ENCODE measurements at regions of chr6 and their contacts with region 1.

Region 1: DNA sequence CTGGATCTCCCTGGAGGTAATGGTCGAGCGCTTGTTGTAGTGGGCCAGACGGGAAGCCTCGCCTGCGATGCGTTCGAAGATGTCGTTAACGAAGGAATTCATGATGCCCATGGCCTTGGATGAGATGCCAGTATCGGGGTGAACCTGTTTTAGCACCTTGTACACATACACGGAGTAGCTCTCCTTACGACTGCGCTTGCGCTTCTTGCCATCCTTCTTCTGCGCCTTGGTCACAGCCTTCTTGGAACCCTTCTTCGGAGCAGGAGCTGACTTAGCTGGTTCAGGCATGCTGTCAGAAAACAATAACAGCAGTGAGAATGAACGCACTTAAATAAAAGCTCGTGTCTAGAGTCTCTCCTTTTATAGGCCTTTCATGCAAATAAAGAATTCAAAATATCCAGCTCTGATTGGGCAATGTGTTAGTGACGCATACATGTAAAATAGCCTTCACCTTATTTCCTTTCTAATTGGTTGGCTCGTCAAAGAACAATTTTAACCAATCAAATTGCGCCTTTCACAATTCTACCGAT is 129.2 kb downstream of the HFE start:
- DNase-seq: peak; percentile 100
- ATAC-seq: peak; percentile 77
- H3K4me3 ChIP-seq: peak overlapping the region; percentile 75
- H3K27ac ChIP-seq: peak overlapping the region; percentile 93
- H3K4me1 ChIP-seq: peaks cover 12% of the 10 kb centered on the region
- H3K27me3 ChIP-seq: no peaks in the 10 kb centered on the region
- CTCF ChIP-seq: no peak
- EP300 ChIP-seq: no peak
- POLR2A ChIP-seq: peak; percentile 84
- RAD21 ChIP-seq: 0 out of 2 replicates have a peak, but pooled peaks have one; percentile 3

Region 2: DNA sequence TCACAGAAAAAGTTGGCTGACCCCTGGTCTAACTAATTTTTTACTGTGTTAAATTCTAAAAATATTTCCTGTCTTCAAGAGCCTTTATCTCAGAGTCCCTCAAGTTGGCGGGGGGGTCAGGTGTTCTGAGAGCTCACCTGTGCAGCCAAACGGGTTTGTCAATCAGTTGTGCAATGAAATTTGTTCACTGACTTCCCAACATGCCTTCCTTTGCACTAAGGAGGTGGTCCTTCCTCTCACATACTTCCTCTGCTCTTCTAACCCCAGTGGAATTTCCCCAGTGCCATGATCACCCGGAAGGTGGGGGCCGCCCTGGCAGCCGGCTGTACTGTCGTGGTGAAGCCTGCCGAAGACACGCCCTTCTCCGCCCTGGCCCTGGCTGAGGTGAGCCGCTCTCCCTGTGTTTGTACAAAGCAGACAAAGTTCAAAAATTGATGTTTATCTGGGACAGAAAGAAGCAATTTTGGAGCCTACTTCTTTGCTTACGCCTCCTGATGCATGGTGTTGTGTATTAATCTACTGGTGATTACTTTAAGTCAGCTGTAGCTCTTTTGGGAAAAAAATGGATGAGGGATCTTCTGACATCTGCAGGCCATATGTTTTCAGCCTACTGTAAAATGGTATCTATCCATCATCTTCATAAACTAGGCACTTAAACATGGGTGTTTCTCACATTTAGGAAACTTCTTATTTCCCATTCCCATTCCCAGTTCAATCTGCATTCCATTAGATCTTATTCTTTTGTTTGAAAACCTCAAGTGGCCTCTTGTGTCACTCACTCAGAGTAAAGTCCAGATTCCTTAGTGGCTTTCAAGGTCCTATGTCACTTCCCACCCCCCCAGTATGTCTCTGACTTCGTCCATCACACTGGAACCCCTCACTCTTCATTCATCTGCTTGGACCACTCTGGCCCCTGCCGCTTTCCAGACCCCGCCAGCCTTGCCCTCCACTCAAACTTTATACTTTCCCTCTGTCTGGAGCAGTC is 1711.5 kb before region 1 on chr6:
- CTCF ChIA-PET with region 1: no interaction called
- POLR2A ChIA-PET with region 1: no interaction called
- RAD21 ChIA-PET with region 1: no interaction called
- SMC1A ChIA-PET with region 1: no interaction called
- in situ Hi-C with region 1: no loop called
- intact Hi-C with region 1: no loop called
- DNase-seq: no peak
- ATAC-seq: no peak
- H3K4me3 ChIP-seq: no peak overlapping the region
- H3K27ac ChIP-seq: no peak overlapping the region
- H3K4me1 ChIP-seq: no peaks in the 10 kb centered on the region
- H3K27me3 ChIP-seq: no peaks in the 10 kb centered on the region
- CTCF ChIP-seq: no peak
- EP300 ChIP-seq: no peak
- POLR2A ChIP-seq: no peak
- RAD21 ChIP-seq: no peak

Region 3: GRCh38 chr6:24655215-24655614 is 1561.2 kb before region 1 on chr6:
- CTCF ChIA-PET with region 1: no interaction called
- POLR2A ChIA-PET with region 1: no interaction called
- RAD21 ChIA-PET with region 1: no interaction called
- SMC1A ChIA-PET with region 1: no interaction called
- in situ Hi-C with region 1: no loop called
- intact Hi-C with region 1: no loop called
- DNase-seq: no peak
- ATAC-seq: no peak
- H3K4me3 ChIP-seq: no peak overlapping the region
- H3K27ac ChIP-seq: no peak overlapping the region
- H3K4me1 ChIP-seq: no peaks in the 10 kb centered on the region
- H3K27me3 ChIP-seq: no peaks in the 10 kb centered on the region
- CTCF ChIP-seq: no peak
- EP300 ChIP-seq: no peak
- POLR2A ChIP-seq: no peak
- RAD21 ChIP-seq: no peak

Region 4: DNA sequence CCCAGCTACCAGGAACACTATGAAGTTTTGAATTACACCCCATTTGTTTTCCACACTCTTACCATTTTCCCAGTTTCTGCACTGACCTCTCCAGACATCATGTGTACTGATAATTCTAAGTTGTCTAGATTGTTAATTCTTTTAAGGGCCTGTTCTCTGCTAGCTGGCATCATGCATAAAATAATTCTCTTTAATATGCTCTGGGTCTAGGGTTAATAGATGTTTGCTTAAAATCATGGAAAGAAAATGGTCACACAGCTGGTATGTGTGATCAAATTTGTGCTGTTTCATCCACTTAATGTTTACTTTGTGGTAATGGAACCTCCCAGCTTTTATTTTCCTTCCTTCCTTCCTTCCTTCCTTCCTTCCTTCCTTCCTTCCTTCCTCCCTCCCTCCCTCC is 80.1 kb before region 1 on chr6:
- CTCF ChIA-PET with region 1: no interaction called
- POLR2A ChIA-PET with region 1: no interaction called
- RAD21 ChIA-PET with region 1: no interaction called
- SMC1A ChIA-PET with region 1: no interaction called
- in situ Hi-C with region 1: no loop called
- intact Hi-C with region 1: no loop called
- DNase-seq: no peak
- ATAC-seq: no peak
- H3K4me3 ChIP-seq: no peak overlapping the region
- H3K27ac ChIP-seq: no peak overlapping the region
- H3K4me1 ChIP-seq: peaks cover 14% of the 10 kb centered on the region
- H3K27me3 ChIP-seq: no peaks in the 10 kb centered on the region
- CTCF ChIP-seq: no peak
- EP300 ChIP-seq: no peak
- POLR2A ChIP-seq: no peak
- RAD21 ChIP-seq: no peak

Region 5: DNA sequence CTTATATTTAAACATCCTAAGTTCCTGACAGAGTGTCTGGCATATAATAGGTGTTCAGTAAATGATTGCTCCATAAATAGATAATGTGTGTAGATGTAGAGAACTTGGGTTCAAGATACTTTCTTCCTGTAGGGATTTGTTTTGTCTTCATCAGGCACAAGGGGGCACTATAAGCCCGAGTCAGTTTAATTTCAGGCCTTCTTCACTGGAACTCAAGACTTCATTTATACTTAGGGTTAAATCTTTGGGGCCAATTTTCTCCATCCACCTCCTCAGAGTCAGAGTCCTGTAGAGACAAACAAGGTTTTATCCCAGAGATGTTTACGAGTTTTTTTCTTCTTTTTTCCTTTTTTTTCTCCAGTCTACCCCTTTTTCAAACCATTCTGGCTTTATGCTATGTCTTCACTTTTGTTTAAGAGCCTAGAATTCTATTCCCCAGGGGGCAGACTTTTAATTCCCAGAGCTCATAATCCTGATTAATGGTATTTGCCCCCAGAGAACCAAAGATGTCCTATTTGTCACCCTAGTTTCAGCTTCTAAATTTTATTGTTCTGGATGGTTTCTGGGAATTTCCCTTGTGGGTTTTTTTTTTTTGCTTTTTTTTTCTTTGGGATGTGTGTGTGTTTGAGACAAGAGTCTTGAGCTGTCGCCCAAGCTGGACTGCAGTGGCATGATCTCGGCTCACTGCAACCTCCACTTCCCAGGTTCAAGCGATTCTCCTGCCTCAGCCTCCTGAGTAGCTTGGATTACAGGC is 40.8 kb before region 1 on chr6:
- CTCF ChIA-PET with region 1: interaction called, 8 read pairs
- POLR2A ChIA-PET with region 1: interaction called, 6 read pairs
- RAD21 ChIA-PET with region 1: interaction called, 14 read pairs
- SMC1A ChIA-PET with region 1: interaction called, 17 read pairs
- in situ Hi-C with region 1: no loop called
- intact Hi-C with region 1: loop called (anchors 1 kb)
- DNase-seq: no peak
- ATAC-seq: peak; percentile 28
- H3K4me3 ChIP-seq: peak overlapping the region; percentile 9; the same call in 1 of the 2 replicates
- H3K27ac ChIP-seq: peak overlapping the region; percentile 27
- H3K4me1 ChIP-seq: peaks cover 27% of the 10 kb centered on the region
- H3K27me3 ChIP-seq: no peaks in the 10 kb centered on the region
- CTCF ChIP-seq: peak; percentile 56 to 77 (median 64); a peak in 5 of 6 replicates
- EP300 ChIP-seq: no peak
- POLR2A ChIP-seq: no peak
- RAD21 ChIP-seq: peak; percentile 91

Region 6: GRCh38 chr6:26204332-26205165 is 11.9 kb before region 1 on chr6:
- CTCF ChIA-PET with region 1: interaction called, 25 read pairs
- POLR2A ChIA-PET with region 1: interaction called, 85 read pairs
- RAD21 ChIA-PET with region 1: interaction called, 36 read pairs
- SMC1A ChIA-PET with region 1: interaction called, 19 read pairs
- in situ Hi-C with region 1: no loop called
- intact Hi-C with region 1: loop called (anchors 1 kb)
- DNase-seq: peak; percentile 97
- ATAC-seq: peak; percentile 76
- H3K4me3 ChIP-seq: peak overlapping the region; percentile 72
- H3K27ac ChIP-seq: peak overlapping the region; percentile 96
- H3K4me1 ChIP-seq: peaks cover 14% of the 10 kb centered on the region
- H3K27me3 ChIP-seq: no peaks in the 10 kb centered on the region
- CTCF ChIP-seq: peak; percentile 23 to 49 (median 25); a peak in 4 of 6 replicates
- EP300 ChIP-seq: peak; percentile 68 to 86; a peak in 3 of 4 replicates
- POLR2A ChIP-seq: peak; percentile 91
- RAD21 ChIP-seq: 0 out of 2 replicates have a peak, but pooled peaks have one; percentile 5

Region 7: GRCh38 chr6:26249957-26250697 is 33.7 kb after region 1 on chr6:
- CTCF ChIA-PET with region 1: interaction called, 20 read pairs
- POLR2A ChIA-PET with region 1: interaction called, 35 read pairs
- RAD21 ChIA-PET with region 1: interaction called, 32 read pairs
- SMC1A ChIA-PET with region 1: interaction called, 26 read pairs
- in situ Hi-C with region 1: no loop called
- intact Hi-C with region 1: loop called (anchors 2 kb)
- DNase-seq: peak; percentile 97
- ATAC-seq: peak; percentile 64
- H3K4me3 ChIP-seq: peak overlapping the region; percentile 76
- H3K27ac ChIP-seq: peak overlapping the region; percentile 91
- H3K4me1 ChIP-seq: no peaks in the 10 kb centered on the region; the same call in 1 of the 2 replicates
- H3K27me3 ChIP-seq: no peaks in the 10 kb centered on the region
- CTCF ChIP-seq: peak; percentile 56 to 67 (median 65)
- EP300 ChIP-seq: no peak
- POLR2A ChIP-seq: peak; percentile 97
- RAD21 ChIP-seq: 0 out of 2 replicates have a peak, but pooled peaks have one; percentile 22